Gastrocnemius medialis (tissue), 4 donors: ENCODE measurements at regions of chr20 and their contacts with region 1.

Region 1: DNA sequence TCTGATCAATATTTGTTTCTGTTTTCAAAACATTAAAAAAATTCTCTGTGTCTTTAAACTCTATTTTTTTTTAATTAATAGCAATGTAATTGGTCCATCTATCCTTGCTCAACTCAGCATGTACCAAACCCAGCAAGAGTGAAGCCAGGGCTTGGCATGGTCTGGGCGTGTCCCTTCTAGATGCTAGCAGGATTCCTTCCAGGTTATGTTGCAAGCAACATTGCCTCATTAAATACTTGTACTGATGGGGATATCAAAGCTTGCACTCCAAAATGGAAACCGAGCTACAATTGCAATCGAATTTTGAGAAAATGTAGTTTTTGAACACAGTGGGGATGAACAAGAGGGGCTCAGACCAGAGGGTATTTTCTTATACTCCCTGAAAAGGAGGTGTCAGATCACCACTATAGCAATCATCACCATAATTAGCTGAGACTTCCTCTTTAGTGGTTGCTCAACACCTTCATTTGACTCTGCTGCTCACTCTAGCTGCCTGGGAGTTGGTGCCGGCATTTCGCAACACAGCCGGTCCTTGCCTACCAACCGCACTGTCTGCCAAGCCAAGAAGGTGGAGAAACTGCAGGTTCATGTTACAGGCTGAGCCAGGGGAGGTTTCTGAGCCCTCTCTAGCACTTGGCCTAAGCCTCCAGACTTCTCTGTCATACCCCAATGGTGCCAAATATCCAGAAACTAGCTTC is 67.8 kb upstream of the RALGAPA2 start:
- DNase-seq: peak; percentile 96 to 99
- ATAC-seq: peak; percentile 90 to 93
- H3K4me3 ChIP-seq: peak overlapping the region in 3 of 4 donors; percentile 16 to 52 (median 29)
- H3K27ac ChIP-seq: peak overlapping the region; percentile 86 to 92 (median 88)
- H3K4me1 ChIP-seq: peaks cover 44 to 49% of the 10 kb centered on the region in 2 donors
- H3K27me3 ChIP-seq: no peaks in the 10 kb centered on the region
- CTCF ChIP-seq: no peak
- POLR2A ChIP-seq: no peak

Region 2: DNA sequence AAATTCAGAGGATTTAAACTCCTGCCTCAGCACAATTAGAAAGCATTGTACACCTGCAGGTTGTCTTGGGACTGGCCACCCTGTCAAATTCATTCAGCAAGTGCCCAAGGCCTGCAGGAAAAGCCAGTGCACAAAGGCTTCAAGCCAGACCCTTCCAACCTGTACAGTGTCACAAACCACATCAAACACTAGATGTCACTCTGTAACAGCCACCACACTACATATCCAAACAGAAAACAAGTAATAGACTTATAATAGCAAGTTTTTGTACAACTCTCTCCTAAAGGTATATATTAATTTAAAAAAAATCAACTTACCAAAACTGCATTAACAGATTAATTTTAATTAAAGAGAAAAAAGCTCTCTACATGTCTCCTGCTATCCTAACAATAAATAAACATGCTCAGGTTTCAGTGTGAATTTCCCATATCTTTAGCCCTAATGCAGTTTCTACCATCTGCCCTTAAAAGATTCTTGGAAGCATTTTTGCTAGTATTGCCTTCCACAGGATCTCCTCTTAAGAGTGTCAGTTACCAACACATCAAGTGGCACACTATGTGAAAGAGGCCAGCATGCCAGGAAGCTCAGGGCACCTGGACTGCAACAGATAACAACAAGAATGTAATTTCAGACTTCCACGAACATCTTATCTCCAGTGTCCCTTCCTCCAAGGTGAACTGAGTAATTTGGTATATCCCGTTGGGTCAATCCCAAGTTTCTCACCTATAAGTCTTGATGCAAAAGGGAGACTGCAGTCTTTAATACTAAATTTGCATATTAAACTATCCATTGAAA is 115.3 kb before region 1 on chr20:
- in situ Hi-C with region 1: no loop called
- intact Hi-C with region 1: loop called (anchors 2 kb)
- DNase-seq: no peak
- ATAC-seq: peak; percentile 90
- H3K4me3 ChIP-seq: no peak overlapping the region
- H3K27ac ChIP-seq: peak overlapping the region; percentile 48 to 70 (median 66)
- H3K4me1 ChIP-seq: peaks cover 43 to 47% of the 10 kb centered on the region in 2 donors
- H3K27me3 ChIP-seq: no peaks in the 10 kb centered on the region
- CTCF ChIP-seq: peak; percentile 37 to 78 (median 61)
- POLR2A ChIP-seq: no peak

Region 3: DNA sequence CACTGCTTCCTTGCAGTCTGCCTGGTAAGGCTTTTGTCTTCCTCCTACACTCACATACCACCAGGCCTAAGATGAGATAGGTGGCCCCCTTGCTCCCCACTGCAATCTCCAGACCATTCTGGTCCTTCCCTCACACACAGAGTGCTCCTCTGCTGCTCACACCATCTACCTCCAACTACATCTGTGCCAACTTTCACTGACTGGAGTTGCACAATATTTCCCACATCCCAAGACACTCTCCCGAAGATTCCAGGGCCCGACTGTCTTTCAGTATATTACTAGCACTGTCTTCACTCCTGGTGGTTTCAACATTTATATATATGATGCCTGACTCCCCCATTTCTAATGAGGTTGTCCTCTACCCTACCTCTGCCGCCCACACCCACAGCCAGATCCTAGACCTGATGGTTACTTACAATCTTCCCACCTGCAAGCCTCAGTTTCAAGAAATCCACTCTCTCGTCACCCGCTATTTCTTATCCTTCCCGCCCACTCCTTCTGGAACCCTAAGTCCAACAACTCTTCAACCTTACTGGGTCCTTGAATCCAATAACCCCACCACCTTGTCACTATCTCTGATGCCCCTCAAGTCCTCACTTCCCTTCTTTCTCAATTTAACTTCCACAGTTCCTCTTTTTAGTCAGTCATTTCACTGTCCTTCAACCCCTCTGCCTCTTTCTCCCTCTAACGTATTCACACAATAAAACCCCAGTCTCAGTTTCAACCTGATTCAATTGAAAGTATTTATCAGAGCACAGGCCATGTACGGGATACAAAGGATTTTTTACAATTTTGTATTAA is 89.4 kb before region 1 on chr20:
- in situ Hi-C with region 1: loop called in 1 of 4 experiments (anchors 10 kb)
- intact Hi-C with region 1: loop called (anchors 5 kb)
- DNase-seq: peak in 1 of 2 donors; percentile 22
- ATAC-seq: peak; percentile 21 to 84
- H3K4me3 ChIP-seq: no peak overlapping the region
- H3K27ac ChIP-seq: peak overlapping the region in 3 of 4 donors; percentile 32 to 67 (median 61)
- H3K4me1 ChIP-seq: peaks cover 88 to 92% of the 10 kb centered on the region in 2 donors
- H3K27me3 ChIP-seq: no peaks in the 10 kb centered on the region
- CTCF ChIP-seq: no peak
- POLR2A ChIP-seq: no peak

Region 4: GRCh38 chr20:20712474-20713243 is 67.6 kb before region 1 on chr20 and contains the start of gene RALGAPA2:
- in situ Hi-C with region 1: no loop called
- intact Hi-C with region 1: loop called (anchors 1 kb)
- DNase-seq: peak; percentile 97 to 99
- ATAC-seq: peak; percentile 86 to 87
- H3K4me3 ChIP-seq: peak within 1 kb of the TSS; percentile 67 to 87 (median 82)
- H3K27ac ChIP-seq: peak within 1 kb of the TSS; percentile 94 to 98 (median 97)
- H3K4me1 ChIP-seq: peaks cover 38 to 47% of the 10 kb centered on the region in 2 donors
- H3K27me3 ChIP-seq: no peaks in the 10 kb centered on the region
- CTCF ChIP-seq: peak in 1 of 5 experiments; percentile 30
- POLR2A ChIP-seq: peak; percentile 99
- total RNA-seq, gene RALGAPA2: 43.2 to 56.9 (median 52.0) TPM

Region 5: GRCh38 chr20:20731945-20732296 is 48.4 kb before region 1 on chr20:
- in situ Hi-C with region 1: no loop called
- intact Hi-C with region 1: loop called (anchors 1 kb)
- DNase-seq: peak; percentile 45 to 77
- ATAC-seq: peak; percentile 97 to 98
- H3K4me3 ChIP-seq: no peak overlapping the region
- H3K27ac ChIP-seq: peak overlapping the region; percentile 87 to 92 (median 90)
- H3K4me1 ChIP-seq: peaks cover 32 to 59% of the 10 kb centered on the region in 2 donors
- H3K27me3 ChIP-seq: no peaks in the 10 kb centered on the region
- CTCF ChIP-seq: no peak
- POLR2A ChIP-seq: peak in 1 of 2 donors; percentile 15

Region 6: GRCh38 chr20:20743511-20744169 is 36.6 kb before region 1 on chr20:
- in situ Hi-C with region 1: no loop called
- intact Hi-C with region 1: loop called (anchors 2 kb)
- DNase-seq: peak; percentile 69 to 89
- ATAC-seq: peak; percentile 88 to 92
- H3K4me3 ChIP-seq: peak overlapping the region; percentile 31 to 41 (median 38)
- H3K27ac ChIP-seq: peak overlapping the region; percentile 86 to 93 (median 88)
- H3K4me1 ChIP-seq: peaks cover 45 to 54% of the 10 kb centered on the region in 2 donors
- H3K27me3 ChIP-seq: no peaks in the 10 kb centered on the region
- CTCF ChIP-seq: no peak
- POLR2A ChIP-seq: peak in 1 of 2 donors; percentile 14

Region 7: DNA sequence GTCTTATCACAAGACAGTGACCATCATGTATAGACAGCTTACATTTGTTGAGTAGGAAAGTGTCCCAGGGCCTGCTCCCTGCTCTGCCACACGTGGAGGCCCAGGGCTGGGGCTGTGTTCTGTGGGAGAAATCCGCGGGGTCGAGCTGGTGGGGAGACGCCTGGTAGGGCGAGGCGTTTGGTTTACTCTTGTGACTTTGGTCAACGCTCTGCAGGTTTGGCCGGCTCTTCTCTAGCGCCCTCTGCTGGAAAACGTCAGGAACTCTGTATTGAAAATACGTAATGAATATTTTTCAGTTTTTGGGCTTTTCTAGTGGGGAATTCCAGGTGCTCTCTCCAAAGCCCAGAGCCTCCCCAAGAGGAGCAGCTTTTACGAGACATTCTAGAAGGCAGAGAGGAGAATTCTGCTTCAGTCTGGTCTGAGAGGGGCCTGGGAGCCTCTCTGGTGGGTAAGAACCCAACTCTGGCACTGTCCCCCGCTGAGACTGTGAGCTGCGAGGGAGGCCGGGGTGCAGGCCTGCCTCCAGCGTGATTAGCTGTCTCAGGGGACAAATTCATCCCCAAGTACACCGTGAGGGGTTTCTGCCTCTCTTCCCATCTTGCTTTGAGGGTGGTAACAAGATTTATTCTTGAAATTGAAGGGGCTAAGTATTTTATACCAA is 44.8 kb after region 1 on chr20:
- in situ Hi-C with region 1: no loop called
- intact Hi-C with region 1: loop called (anchors 5 kb)
- DNase-seq: peak; percentile 38 to 42
- ATAC-seq: peak; percentile 69 to 78
- H3K4me3 ChIP-seq: peak overlapping the region in 3 of 4 donors; percentile 8 to 23 (median 13)
- H3K27ac ChIP-seq: peak overlapping the region in 3 of 4 donors; percentile 15 to 46 (median 24)
- H3K4me1 ChIP-seq: peaks cover 11 to 19% of the 10 kb centered on the region in 2 donors
- H3K27me3 ChIP-seq: no peaks in the 10 kb centered on the region
- CTCF ChIP-seq: peak; percentile 79 to 93 (median 90)
- POLR2A ChIP-seq: no peak